Activated B cell treated with CpG ODN at 0.5 μM for 24 hours (primary cell): ENCODE measurements at regions of chr10 and their contacts with region 1.

Region 1: DNA sequence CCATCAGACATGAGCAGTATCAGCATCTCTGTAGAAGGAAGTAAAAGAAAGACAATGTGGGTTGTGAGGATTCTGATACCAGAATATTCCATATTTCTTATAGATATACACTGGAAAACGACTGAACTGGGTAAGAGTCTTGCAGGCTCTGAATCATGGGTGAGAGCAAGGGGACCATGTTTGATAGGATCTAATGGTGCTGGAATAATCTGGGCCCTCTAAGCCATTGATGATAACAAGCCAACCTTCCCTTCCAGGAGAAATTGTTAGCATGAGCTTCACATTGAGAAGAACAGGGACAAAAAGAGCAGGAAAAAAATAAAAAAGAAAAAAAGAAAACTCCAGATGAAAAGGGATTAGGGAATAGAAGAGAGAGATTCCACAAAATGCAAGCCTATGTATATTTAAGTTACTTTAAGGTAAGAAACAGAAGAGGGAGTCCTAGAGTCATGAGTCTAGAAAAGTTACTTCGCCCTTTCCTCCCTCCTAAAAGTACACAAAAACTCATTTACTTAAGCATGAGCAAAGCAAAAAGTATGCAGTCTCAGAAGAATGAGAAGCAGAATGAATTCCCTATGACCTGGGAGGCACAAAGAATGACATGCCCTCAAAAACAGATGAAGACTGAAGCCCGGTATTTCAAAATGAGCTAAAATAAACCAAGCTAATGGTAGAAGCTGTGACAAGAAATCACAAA is 181.9 kb downstream of the TMEM26 start:
- DNase-seq: no peak
- ATAC-seq: no peak
- H3K4me3 Mint-ChIP-seq: no peak overlapping the region
- H3K27ac Mint-ChIP-seq: no peak overlapping the region
- H3K4me1 Mint-ChIP-seq: no peaks in the 10 kb centered on the region
- H3K27me3 Mint-ChIP-seq: peaks cover 18% of the 10 kb centered on the region
- CTCF ChIP-seq: no peak

Region 2: GRCh38 chr10:61244261-61244775 is 27.0 kb before region 1 on chr10:
- CTCF ChIA-PET with region 1: no interaction called
- POLR2A ChIA-PET with region 1: no interaction called
- intact Hi-C with region 1: no loop called
- DNase-seq: no peak
- ATAC-seq: no peak
- H3K4me3 Mint-ChIP-seq: no peak overlapping the region
- H3K27ac Mint-ChIP-seq: no peak overlapping the region
- H3K4me1 Mint-ChIP-seq: no peaks in the 10 kb centered on the region
- H3K27me3 Mint-ChIP-seq: peaks cover 3% of the 10 kb centered on the region
- CTCF ChIP-seq: no peak

Region 3: GRCh38 chr10:61304746-61305145 is 33.5 kb after region 1 on chr10:
- CTCF ChIA-PET with region 1: no interaction called
- POLR2A ChIA-PET with region 1: no interaction called
- intact Hi-C with region 1: loop called (anchors 1 kb)
- DNase-seq: no peak
- ATAC-seq: no peak
- H3K4me3 Mint-ChIP-seq: no peak overlapping the region
- H3K27ac Mint-ChIP-seq: no peak overlapping the region
- H3K4me1 Mint-ChIP-seq: no peaks in the 10 kb centered on the region
- H3K27me3 Mint-ChIP-seq: no peaks in the 10 kb centered on the region
- CTCF ChIP-seq: no peak

Region 4: DNA sequence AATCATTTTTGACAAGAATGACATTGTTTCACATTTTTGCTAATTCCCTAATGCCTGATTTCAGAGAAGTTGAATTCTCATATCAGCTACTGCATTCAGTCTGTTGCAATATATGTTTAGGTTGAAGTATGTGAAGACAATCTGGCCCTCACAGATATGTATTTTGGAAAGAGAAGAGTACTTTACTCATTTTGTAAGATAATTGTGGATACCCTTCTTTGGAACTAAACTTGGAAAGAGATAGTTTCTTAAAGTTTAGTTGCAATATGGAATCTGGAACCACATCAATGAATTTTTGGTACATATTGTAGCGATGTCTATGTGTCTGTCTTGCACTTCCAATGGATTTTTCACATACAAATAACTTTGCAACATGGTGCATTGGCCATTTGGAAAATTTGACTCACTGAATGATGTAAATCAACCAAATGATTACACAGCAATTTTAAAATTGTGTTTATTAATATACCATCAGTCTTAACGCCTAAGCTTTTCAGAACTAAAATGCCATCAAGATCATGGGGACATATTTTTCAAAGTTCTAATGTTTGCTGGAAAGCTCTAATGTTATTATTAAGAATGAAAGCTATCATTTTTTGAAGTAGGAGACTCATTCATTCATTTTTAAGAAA is 221.2 kb after region 1 on chr10:
- CTCF ChIA-PET with region 1: no interaction called
- POLR2A ChIA-PET with region 1: no interaction called
- intact Hi-C with region 1: no loop called
- DNase-seq: no peak
- ATAC-seq: no peak
- H3K4me3 Mint-ChIP-seq: no peak overlapping the region
- H3K27ac Mint-ChIP-seq: no peak overlapping the region
- H3K4me1 Mint-ChIP-seq: no peaks in the 10 kb centered on the region
- H3K27me3 Mint-ChIP-seq: peaks cover 10% of the 10 kb centered on the region
- CTCF ChIP-seq: no peak